ENCODE measurements at regions of chr1 and their contacts with region 1.

Region 1: DNA sequence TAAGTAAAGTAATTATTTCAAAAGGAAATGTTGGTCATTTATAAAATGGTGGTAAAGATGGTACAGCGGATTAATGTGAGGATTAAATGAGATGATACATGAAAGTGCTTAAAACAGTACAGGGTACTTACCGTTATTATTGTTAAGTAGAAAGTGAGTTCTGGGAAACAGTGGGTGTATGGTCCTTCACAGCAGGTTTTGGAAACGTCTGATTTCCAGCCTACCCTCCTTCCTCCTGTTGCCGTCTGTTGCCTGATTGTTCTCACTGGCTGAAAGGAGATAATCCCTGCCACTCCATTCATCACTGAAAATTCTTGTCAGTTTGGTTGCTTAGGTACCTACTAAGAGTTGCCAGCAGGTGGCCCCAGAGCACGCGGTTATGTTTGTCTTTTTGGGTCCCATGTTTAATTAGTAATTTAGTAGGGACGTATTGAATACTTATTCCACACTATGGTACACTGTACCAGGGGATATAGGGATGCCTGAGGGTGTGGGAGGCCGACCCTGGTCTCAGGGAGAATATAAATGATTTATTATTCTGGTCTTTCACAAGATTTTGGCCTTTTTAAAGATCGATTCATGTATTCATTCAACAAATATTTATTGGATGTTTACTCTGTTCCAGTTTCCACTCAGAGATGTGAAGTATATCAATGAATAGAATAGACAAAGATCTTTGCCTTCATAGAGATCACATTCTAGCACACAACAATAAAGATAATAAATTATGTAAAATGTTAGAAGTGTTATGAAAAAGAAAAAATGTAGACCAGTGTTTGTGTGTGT is 30.8 kb upstream of the RPTN start:
- DNase-seq: peak; percentile 83
- ATAC-seq: peak; percentile 76
- H3K4me3 Mint-ChIP-seq: peak overlapping the region; percentile 65
- H3K27ac Mint-ChIP-seq: peak overlapping the region; percentile 48
- H3K4me1 Mint-ChIP-seq: peaks cover 8% of the 10 kb centered on the region
- H3K27me3 Mint-ChIP-seq: peaks cover 11% of the 10 kb centered on the region

Region 2: DNA sequence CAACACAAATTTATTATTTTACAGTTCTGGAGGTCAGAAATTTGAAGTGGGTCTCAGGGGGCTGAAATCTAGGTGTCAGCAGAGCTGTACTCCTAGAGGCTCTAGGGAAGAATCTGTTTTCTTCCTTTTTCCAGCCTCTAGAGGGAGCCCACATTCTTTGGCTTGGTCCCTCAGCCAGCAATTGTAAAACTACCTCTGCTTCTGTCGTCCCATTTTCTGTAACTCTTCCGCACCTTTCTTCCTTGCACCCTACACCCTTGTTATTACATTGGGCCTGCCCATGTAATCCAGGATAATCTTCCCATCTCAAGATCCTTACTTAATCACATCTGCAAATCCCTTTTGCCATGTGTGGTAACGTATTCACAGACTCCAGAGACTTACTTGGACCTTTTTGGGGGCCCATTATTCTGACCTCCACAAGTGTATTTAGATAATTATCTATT is 255.8 kb before region 1 on chr1:
- CTCF ChIA-PET with region 1: no interaction called
- POLR2A ChIA-PET with region 1: no interaction called
- intact Hi-C with region 1: loop called (anchors 5 to 10 kb)
- DNase-seq: peak; percentile 63
- ATAC-seq: peak; percentile 90
- H3K4me3 Mint-ChIP-seq: no peak overlapping the region
- H3K27ac Mint-ChIP-seq: no peak overlapping the region
- H3K4me1 Mint-ChIP-seq: peaks cover 2% of the 10 kb centered on the region
- H3K27me3 Mint-ChIP-seq: no peaks in the 10 kb centered on the region

Region 3: DNA sequence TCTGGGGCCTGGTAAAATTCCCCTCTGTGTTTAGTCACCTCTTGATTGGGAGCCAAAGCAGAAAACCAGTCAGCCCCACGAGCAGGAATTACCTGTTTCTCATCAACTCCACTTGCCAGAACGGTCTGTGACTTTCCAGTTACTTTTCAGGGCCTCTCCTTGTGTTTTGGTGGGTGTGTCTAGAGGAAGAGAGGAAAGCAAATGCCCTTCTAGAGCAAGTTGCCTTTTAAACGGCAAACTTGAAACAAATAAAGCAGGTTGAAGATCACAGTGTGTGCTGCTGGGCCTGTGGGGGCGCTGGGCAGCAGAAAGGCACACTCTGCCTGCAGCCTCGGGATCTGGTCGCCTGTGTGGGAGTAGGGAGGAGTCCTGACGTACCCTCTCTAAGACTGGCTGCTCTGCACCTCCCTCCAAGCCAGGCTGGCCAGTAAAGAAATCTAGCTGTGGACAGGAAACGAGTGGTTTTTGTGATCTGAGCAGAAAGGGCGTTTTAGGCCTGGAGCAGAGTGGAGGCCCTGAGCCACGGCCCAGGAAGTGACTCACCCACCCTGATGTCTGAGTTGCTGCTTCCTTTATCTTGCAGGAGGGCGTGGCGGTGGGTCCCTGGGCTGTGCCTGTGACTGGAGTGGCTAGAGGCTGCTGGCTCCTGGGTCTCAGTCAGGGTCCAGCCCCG is 142.0 kb before region 1 on chr1:
- CTCF ChIA-PET with region 1: interaction called, 175 read pairs
- POLR2A ChIA-PET with region 1: no interaction called
- intact Hi-C with region 1: loop called (anchors 1 kb)
- DNase-seq: peak; percentile 94
- ATAC-seq: peak; percentile 90
- H3K4me3 Mint-ChIP-seq: peak overlapping the region; percentile 72
- H3K27ac Mint-ChIP-seq: peak overlapping the region; percentile 99
- H3K4me1 Mint-ChIP-seq: peaks cover 25% of the 10 kb centered on the region
- H3K27me3 Mint-ChIP-seq: peaks cover 2% of the 10 kb centered on the region

Region 4: GRCh38 chr1:152141974-152142584 is 47.8 kb before region 1 on chr1:
- CTCF ChIA-PET with region 1: interaction called, 10 read pairs
- POLR2A ChIA-PET with region 1: no interaction called
- intact Hi-C with region 1: loop called (anchors 1 kb)
- DNase-seq: peak; percentile 55
- ATAC-seq: no peak
- H3K4me3 Mint-ChIP-seq: no peak overlapping the region
- H3K27ac Mint-ChIP-seq: no peak overlapping the region
- H3K4me1 Mint-ChIP-seq: peaks cover 11% of the 10 kb centered on the region
- H3K27me3 Mint-ChIP-seq: peaks cover 50% of the 10 kb centered on the region

Region 5: DNA sequence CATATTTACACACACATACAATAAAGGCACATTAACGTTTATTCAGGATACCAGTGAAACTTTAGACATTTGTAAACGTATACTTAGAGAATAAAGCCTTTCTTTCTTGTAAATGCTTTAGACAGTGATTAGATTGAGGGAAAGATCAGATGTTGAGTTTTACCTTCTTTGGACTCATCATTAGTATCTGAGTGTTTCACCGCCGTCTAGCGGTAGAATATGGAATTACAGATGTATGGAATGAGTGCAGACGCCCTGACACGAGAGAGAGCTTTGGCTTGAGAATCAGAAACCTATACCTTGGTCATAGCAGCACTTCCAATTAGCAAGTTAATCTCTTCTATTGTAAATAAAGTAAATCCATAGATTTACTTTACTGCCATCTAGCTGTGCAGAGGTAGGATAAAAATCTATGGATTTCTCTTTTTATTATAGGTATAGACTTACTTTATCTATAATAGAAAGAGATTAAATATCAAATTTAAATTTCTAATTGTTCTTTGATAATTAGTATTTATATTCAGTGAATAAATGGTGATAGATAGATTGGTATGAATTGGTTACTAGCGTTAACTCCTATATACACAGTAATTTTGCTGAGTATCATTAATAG is 157.4 kb after region 1 on chr1:
- CTCF ChIA-PET with region 1: interaction called, 8 read pairs
- POLR2A ChIA-PET with region 1: no interaction called
- intact Hi-C with region 1: loop called (anchors 1 kb)
- DNase-seq: peak; percentile 60
- ATAC-seq: peak; percentile 73
- H3K4me3 Mint-ChIP-seq: no peak overlapping the region
- H3K27ac Mint-ChIP-seq: no peak overlapping the region
- H3K4me1 Mint-ChIP-seq: peaks cover 7% of the 10 kb centered on the region
- H3K27me3 Mint-ChIP-seq: peaks cover 22% of the 10 kb centered on the region

Region 6: DNA sequence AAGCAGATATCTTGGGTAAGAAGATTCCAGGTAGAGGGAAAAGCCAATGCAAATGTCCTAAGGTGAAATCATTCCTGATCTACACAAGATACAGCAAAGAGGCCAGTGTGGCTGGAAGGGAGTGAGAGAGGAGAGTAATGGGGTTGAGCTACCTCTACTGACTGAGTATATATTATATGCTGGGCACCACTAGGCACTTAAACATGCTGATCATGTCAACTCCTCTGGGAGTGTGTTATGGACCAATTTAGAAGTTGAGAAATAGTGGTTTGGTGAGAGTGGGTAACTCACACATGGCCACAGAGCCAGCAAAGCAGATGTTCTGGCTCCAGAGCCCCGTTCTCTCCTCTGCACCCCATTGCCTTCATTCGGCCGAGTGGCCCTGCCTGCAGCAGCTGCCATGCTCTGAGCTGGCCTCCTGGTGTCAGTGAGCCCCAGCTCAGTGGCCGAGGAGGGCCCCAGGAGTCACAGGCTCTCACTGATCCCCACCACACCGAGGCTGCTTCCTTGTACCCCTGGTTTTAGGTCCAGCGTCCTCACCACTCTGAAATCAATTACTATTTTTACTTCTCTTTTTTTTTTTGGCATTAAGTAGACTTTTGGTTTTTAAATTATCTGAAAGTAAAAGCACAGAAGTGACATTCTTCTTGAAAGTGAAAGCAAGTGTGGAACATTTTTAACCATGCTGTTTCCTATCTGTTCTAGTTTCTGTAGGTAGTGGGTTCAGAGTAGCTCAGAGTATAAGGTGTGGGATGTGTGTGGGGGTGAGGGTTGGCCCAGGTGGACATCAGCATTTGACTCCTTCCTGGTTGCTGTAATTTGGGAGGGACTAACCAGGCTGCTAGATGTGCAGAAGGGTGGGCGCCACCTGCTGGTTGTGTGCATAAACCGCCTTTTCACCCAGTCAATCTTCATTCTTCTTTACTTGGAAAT is 270.0 kb after region 1 on chr1:
- CTCF ChIA-PET with region 1: interaction called, 193 read pairs
- POLR2A ChIA-PET with region 1: interaction called, 3 read pairs
- intact Hi-C with region 1: loop called (anchors 1 kb)
- DNase-seq: peak; percentile 88
- ATAC-seq: peak; percentile 89
- H3K4me3 Mint-ChIP-seq: peak overlapping the region; percentile 52
- H3K27ac Mint-ChIP-seq: peak overlapping the region; percentile 72
- H3K4me1 Mint-ChIP-seq: peaks cover 31% of the 10 kb centered on the region
- H3K27me3 Mint-ChIP-seq: peaks cover 2% of the 10 kb centered on the region